ENCODE measurements at regions of chr5 and their contacts with region 1.

Region 1: GRCh38 chr5:58460732-58461286 is 923 bp upstream of the PLK2 start:
- DNase-seq: peak; percentile 96

Region 2: GRCh38 chr5:56909294-56910209 is 1551.3 kb before region 1 on chr5 and contains the start of gene SETD9:
- intact Hi-C with region 1: loop called (anchors 10 kb)
- DNase-seq: peak; percentile 99
- total RNA-seq, gene SETD9: 14.2 TPM

Region 3: DNA sequence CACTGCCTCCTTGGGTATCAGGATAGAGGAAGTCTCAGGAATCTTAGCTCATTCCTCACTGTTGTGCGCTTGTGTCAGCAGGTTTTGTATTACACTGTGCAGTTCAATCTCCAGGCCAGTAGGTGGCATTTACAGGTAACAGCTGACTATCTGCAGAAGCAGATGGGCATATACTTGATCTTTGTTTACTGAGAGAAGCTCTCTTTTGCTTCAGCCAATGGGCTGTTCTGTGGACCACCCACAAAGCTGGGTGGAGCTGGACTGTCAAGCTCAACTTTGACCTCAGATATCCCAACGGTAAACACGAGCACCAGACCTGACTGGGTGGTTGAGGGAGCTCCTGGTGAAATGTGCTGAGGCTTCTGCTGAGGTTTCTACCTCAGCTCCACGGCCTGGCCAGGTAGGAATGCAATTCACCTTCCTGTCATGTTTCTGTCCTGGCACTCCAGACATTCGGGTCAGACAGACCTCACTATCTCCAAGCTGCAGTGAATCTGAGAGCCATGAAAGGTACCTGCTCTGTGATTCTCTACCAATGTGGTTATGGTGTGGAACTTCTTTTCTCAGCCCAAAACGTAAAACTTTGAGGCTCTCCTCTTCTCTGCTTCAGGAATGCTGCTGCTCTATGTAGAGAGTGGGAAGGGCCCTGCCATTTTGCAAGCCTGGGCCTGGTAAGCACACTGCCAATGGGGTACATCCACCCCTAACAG is 810.3 kb before region 1 on chr5:
- intact Hi-C with region 1: loop called (anchors 2 kb)
- DNase-seq: no peak

Region 4: GRCh38 chr5:57887851-57888621 is 572.8 kb before region 1 on chr5:
- intact Hi-C with region 1: loop called (anchors 1 kb)
- DNase-seq: no peak

Region 5: DNA sequence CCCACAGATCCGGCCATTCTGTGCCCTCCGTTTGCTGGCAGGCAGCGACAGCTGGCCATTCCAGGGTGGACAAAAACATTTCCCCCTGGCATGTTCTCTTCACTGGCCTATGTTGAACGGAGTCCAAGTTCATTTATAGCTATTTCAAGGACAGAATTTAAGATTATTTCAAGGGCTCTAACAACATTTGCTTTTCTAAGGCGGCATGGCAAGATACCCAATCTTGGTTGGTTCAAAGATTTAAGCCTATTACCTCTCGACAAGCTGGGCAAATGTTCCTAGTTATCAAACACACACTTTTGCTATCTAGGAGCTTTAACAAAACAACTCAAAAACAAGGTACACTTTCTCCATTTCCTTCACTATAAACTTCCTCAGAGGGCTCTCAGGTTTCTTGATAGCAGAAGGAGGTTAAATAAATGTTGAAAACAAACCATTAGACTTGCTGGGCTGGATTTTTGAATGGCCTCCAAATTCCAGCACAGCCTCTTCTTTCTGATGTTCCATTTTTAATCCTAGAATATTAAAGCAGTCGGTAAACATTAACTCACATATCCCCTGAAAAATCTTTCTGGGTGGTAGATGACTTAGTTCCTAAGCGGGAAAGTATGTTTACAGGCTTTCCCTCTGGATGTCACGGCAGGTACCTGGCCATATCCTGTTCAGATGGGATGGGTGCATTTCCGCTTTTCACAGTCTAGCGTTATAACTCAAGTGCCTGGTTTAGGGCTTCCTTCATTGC is 333.2 kb before region 1 on chr5:
- intact Hi-C with region 1: loop called (anchors 5 kb)
- DNase-seq: no peak

Region 6: GRCh38 chr5:58366461-58366860 is 94.3 kb before region 1 on chr5:
- intact Hi-C with region 1: loop called (anchors 10 kb)
- DNase-seq: no peak

Region 7: DNA sequence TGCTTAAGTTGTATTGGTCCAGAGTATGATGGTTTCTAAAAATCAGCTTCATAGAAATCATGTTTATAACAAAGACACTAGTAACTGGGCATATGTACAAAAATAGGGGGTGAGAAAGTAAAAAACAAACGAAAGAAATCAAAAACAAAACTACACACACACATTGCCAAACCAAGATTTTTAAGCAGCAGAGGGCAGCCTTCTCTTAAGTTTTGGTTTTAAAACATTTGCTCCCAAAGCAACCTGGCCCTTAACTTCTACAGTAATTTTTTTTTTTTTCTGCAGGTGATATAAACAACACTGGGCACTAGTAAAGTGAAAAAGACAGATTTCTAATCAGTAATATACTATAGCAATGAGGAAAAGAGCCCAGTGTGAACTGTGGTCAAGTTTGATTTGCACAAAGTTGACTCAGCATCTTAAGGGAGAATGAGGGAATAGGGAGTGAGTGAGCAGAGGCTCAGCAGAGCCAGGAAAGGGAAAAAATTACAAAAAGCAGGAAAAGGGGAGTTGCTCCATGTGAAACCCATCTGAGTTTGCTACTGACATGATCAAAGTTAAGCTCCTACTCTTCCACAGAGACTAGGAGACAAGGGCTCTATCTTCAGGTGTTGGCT is 17.1 kb after region 1 on chr5:
- intact Hi-C with region 1: no loop called
- DNase-seq: no peak